ENCODE measurements at regions of chr1 and their contacts with region 1.

Region 1: GRCh38 chr1:31745096-31745945 is 18.8 kb downstream of the ADGRB2 start:
- DNase-seq: peak; percentile 33 to 62 (median 40)
- H3K4me3 ChIP-seq: no peak overlapping the region
- H3K4me3 Mint-ChIP-seq: no peak overlapping the region
- H3K27ac ChIP-seq: no peak overlapping the region
- H3K27ac Mint-ChIP-seq: peak overlapping the region in 1 of 7 donors; percentile 37
- H3K4me1 ChIP-seq: peaks cover 8% of the 10 kb centered on the region
- H3K4me1 Mint-ChIP-seq: peaks cover 3 to 37% (median 17%) of the 10 kb centered on the region in 4 donors
- H3K27me3 ChIP-seq: no peaks in the 10 kb centered on the region
- H3K27me3 Mint-ChIP-seq: no peaks in the 10 kb centered on the region

Region 2: DNA sequence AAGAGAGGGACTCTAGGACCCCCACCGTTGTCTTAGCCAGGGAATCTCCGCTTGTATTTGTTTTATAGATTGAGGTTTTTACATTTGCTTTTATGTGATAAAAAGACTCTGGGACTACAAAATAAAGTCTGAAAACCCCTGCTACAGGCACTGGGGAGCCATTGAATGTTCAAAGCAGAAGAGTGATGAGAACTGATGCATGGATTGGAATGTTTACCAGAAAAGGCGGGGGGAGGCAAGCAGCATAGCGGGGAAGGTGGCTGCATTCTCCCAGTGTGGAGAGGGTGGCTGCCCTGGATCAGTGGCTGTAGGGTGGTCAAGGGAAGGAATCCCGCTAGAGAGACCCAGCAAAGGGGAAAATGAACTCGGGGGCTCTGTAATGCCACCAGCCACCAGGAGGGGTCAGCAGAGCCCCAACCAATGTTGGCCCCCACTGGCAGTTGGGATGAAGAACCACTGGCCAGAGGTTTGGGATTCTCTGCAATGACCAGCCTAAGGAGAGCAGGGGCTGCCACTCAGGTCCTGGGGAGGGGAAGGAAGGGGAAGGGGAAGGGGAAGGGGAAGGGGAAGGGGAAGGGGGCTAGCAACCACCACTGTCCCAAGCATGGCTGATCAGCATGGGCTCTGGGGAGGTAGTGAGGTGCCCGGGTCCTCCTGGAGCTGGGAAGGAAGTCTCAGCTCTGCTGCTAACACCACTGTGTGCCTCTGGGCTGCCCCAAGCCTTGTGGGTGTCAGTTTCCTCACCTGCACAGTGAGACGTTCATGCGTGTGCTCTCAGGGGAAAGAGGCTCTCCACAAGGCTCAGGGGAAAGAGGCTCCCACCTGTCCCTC is 81.5 kb before region 1 on chr1:
- CTCF ChIA-PET with region 1: no interaction called
- POLR2A ChIA-PET with region 1: interaction called, 3 read pairs
- intact Hi-C with region 1: loop called (anchors 2 kb)
- DNase-seq: peak; percentile 36 to 56 (median 39)
- H3K4me3 ChIP-seq: no peak overlapping the region
- H3K4me3 Mint-ChIP-seq: no peak overlapping the region
- H3K27ac ChIP-seq: no peak overlapping the region
- H3K27ac Mint-ChIP-seq: no peak overlapping the region
- H3K4me1 ChIP-seq: no peaks in the 10 kb centered on the region
- H3K4me1 Mint-ChIP-seq: no peaks in the 10 kb centered on the region
- H3K27me3 ChIP-seq: no peaks in the 10 kb centered on the region
- H3K27me3 Mint-ChIP-seq: peaks cover 4 to 7% of the 10 kb centered on the region in 2 donors

Region 3: DNA sequence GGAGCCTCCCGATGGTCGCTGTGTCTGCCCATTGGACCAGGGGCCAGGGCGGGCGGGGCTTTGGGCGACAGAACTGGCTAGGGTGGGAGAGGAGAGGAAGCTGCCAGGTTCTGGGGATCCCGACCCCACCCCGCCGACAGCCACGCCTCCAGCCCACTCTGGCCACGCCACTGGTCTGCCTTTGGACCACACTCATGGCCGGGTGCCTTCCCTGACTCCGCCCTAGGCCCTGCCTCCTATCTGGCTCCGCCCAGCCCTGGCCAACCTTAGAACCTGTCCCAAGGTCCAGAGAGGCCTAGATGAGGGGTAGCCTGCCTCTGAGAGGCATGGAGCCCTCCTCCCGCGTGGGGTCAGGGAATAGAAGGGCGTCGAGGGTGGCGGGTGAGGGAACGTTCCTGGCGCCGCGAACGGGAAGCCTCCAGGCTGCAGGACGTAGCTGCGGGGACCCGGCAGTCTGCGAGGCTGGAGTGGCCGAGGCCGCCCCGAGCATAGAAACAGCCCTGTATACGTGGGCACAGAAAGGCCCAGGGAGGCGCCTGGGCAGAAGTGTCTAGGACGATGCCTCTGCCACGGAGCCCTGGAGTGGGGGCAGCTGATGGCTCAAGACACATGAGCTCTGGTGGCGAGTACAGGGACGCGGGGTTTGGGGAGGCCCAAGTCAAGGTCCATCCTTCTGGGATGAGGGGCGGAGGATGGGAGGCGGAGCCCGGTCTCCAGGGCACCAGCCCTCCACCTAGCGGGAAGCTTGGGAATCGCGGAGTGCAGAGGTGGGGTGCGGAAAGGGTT is 30.0 kb before region 1 on chr1:
- CTCF ChIA-PET with region 1: interaction called, 6 read pairs
- POLR2A ChIA-PET with region 1: no interaction called
- intact Hi-C with region 1: loop called (anchors 2 kb)
- DNase-seq: peak in 1 of 5 donors; percentile 15
- H3K4me3 ChIP-seq: no peak overlapping the region
- H3K4me3 Mint-ChIP-seq: peak overlapping the region; percentile 44 to 83 (median 70)
- H3K27ac ChIP-seq: no peak overlapping the region
- H3K27ac Mint-ChIP-seq: no peak overlapping the region
- H3K4me1 ChIP-seq: peaks cover 18% of the 10 kb centered on the region
- H3K4me1 Mint-ChIP-seq: peaks cover 7 to 23% (median 15%) of the 10 kb centered on the region in 4 donors
- H3K27me3 ChIP-seq: no peaks in the 10 kb centered on the region
- H3K27me3 Mint-ChIP-seq: peaks cover 33 to 51% of the 10 kb centered on the region in 2 donors

Region 4: GRCh38 chr1:31725777-31726535 is 19.4 kb before region 1 on chr1:
- CTCF ChIA-PET with region 1: no interaction called
- POLR2A ChIA-PET with region 1: no interaction called
- intact Hi-C with region 1: no loop called
- DNase-seq: no peak
- H3K4me3 ChIP-seq: no peak overlapping the region
- H3K4me3 Mint-ChIP-seq: no peak overlapping the region
- H3K27ac ChIP-seq: no peak overlapping the region
- H3K27ac Mint-ChIP-seq: no peak overlapping the region
- H3K4me1 ChIP-seq: no peaks in the 10 kb centered on the region
- H3K4me1 Mint-ChIP-seq: no peaks in the 10 kb centered on the region
- H3K27me3 ChIP-seq: peaks cover 4% of the 10 kb centered on the region
- H3K27me3 Mint-ChIP-seq: peaks cover 4 to 15% of the 10 kb centered on the region in 2 donors

Measured in CD4-positive, alpha-beta memory T cell (primary cell).